GM10248 (cell line): ENCODE measurements at regions of chr4 and their contacts with region 1.

Region 1: DNA sequence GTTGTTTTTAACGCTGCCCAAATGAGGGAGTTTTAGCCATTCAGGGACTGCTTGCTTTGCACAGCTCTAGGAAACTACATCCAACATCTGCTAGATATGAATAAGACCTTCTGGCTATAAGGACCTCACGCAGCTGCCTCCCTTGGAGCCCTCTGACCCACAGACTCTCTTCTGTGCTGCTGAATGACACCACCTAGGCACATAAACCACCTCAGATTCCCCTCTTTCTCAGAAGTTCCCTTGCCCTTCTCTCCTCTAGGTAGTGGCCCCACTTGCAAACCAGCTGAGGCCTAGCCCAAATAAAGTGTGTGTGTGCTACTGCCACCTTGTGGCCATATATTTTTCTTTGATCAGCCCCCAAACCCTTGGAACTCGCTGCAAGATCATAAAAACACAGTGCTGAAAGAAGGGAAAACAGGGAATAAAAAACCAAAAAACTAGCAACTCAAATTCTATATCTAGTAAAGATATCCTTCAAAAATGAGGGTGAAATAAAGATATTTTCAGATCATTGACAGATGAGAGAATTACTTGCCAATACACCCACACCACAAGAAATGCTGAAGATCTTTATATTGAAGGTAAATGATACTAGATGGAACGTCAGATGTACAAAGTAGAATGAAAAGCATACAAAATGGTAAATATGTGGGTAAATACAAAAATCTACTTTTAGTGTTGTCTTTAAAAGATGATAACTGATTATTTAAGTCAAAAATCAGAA is 265.9 kb downstream of the ADAMTS3 start:
- DNase-seq: peak; percentile 10
- CTCF ChIP-seq: peak; percentile 74

Region 2: GRCh38 chr4:71772592-71772991 is 530.6 kb before region 1 on chr4:
- CTCF ChIA-PET with region 1: interaction called, 10 read pairs
- POLR2A ChIA-PET with region 1: no interaction called
- DNase-seq: no peak
- CTCF ChIP-seq: no peak

Region 3: GRCh38 chr4:72286185-72286584 is 17.0 kb before region 1 on chr4:
- CTCF ChIA-PET with region 1: interaction called, 11 read pairs
- POLR2A ChIA-PET with region 1: no interaction called
- DNase-seq: no peak
- CTCF ChIP-seq: no peak

Region 4: GRCh38 chr4:72318421-72319170 is 15.5 kb after region 1 on chr4:
- CTCF ChIA-PET with region 1: interaction called, 24 read pairs
- POLR2A ChIA-PET with region 1: no interaction called
- DNase-seq: no peak
- CTCF ChIP-seq: no peak

Region 5: GRCh38 chr4:72326692-72327632 is 23.8 kb after region 1 on chr4:
- CTCF ChIA-PET with region 1: interaction called, 14 read pairs
- POLR2A ChIA-PET with region 1: no interaction called
- DNase-seq: peak; percentile 4
- CTCF ChIP-seq: peak; percentile 43